Left ventricle myocardium inferior (tissue), 1 donor: ENCODE measurements at regions of chr2 and their contacts with region 1.

Region 1: DNA sequence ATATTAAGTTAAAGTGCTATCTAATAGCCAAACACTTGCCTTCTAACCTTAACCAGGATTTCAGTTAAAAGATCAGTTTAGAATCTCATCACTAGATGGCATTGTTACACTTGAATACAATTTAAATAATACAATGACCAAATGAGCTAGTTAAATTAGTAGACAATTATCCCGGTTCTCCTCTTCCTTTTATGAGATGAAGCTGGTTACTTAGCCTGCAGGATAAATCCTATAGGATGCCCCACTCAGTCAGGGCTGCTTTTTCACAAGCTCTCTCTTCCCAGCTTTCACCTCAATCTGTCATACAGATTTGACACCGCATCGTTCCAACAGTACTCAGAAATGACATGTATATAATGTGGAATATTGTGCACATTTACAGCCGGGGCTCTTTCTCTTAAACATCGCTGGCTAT is 678.8 kb downstream of the KCNJ3 start:
- DNase-seq: no peak
- H3K4me3 ChIP-seq: no peak overlapping the region
- H3K27ac ChIP-seq: no peak overlapping the region
- H3K4me1 ChIP-seq: no peaks in the 10 kb centered on the region
- H3K27me3 ChIP-seq: no peaks in the 10 kb centered on the region
- CTCF ChIP-seq: peak; percentile 43

Region 2: GRCh38 chr2:156589381-156590079 is 1212.3 kb after region 1 on chr2:
- intact Hi-C with region 1: loop called (anchors 10 kb)
- DNase-seq: no peak
- H3K4me3 ChIP-seq: no peak overlapping the region
- H3K27ac ChIP-seq: no peak overlapping the region
- H3K4me1 ChIP-seq: peaks cover 4% of the 10 kb centered on the region
- H3K27me3 ChIP-seq: no peaks in the 10 kb centered on the region
- CTCF ChIP-seq: peak; percentile 68

Region 3: GRCh38 chr2:157194097-157194688 is 1816.9 kb after region 1 on chr2:
- intact Hi-C with region 1: loop called (anchors 5 kb)
- DNase-seq: no peak
- H3K4me3 ChIP-seq: no peak overlapping the region
- H3K27ac ChIP-seq: no peak overlapping the region
- H3K4me1 ChIP-seq: peaks cover 7% of the 10 kb centered on the region
- H3K27me3 ChIP-seq: no peaks in the 10 kb centered on the region
- CTCF ChIP-seq: peak; percentile 75